MCF 10A (cell line): ENCODE measurements at regions of chr3 and their contacts with region 1.

Region 1: DNA sequence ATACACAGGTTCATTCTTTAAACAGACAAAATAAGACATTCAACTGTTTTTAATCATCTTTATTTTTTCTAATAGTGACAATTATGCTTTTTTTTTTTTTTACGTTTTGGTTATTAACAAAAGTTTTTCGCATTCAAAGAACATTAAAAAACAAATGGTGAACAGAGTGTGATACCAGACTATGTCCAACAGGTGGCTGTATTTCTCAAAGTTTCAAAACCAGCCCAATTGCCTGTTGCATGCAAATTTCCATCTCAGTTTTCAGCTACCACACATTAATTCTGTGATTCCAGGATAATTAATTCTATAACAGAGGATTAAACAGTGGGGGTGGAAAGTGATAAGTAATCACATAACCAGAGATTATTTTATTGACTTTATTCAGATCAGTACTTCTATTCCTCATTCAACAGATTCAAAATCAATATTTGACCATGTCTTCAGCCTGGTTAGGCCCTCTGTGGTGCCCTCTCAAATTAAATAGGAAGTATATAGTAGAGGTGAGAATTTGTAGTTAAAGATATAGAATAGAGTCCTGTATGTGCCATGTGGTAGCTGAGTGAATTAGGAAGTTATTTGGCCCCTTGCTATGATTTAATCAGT is 122.2 kb upstream of the DCBLD2 start:
- DNase-seq: peak; percentile 55
- H3K4me3 Mint-ChIP-seq: no peak overlapping the region
- H3K27ac Mint-ChIP-seq: no peak overlapping the region
- H3K4me1 Mint-ChIP-seq: no peaks in the 10 kb centered on the region
- H3K27me3 Mint-ChIP-seq: no peaks in the 10 kb centered on the region
- CTCF ChIP-seq: peak; percentile 62

Region 2: GRCh38 chr3:99473321-99473751 is 449.6 kb after region 1 on chr3:
- CTCF ChIA-PET with region 1: no interaction called
- POLR2A ChIA-PET with region 1: no interaction called
- intact Hi-C with region 1: no loop called
- DNase-seq: peak; percentile 55
- H3K4me3 Mint-ChIP-seq: no peak overlapping the region
- H3K27ac Mint-ChIP-seq: no peak overlapping the region
- H3K4me1 Mint-ChIP-seq: no peaks in the 10 kb centered on the region
- H3K27me3 Mint-ChIP-seq: no peaks in the 10 kb centered on the region
- CTCF ChIP-seq: no peak

Region 3: DNA sequence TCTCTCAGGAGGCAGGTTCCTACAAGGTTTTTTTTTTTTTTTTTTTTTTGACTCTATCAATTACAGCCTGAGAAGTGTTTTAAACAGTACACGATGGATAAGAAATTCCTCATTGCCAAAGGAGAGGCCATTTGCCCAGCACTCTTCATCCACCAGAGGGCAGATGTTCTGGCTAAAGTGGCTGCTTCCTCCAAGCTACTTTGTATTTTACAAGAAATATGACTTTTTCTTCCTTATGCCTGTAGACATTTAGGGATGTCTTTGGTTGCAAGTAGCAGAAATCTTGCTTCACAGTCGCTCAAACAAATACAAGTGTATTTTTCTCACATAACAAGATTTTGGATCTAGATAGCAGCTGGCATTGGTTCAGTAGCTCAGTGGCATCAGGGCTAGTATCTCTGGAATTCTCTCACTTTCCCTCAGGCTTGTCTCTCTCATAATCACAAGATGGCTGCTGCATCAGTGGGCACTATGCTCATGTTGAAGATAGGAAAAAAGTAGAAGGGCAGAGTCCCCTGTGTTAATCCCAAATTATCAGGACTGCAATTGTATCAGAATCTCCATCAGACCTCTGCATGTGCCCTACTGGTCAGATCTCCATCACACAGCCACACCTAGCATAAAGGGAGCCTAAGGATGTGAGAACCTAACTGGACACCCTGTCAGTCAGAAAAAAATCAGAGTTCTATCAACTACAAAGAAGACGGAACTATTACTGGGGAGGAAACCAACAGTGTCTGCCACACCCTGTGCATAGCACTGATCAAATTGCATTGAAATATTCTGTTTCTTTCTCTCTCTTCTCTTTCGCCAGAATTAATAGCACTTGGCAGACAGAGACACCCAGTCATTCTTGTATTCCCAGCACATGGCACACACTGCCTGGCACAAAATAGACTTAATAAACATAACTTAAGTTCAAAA is 475.8 kb after region 1 on chr3:
- CTCF ChIA-PET with region 1: interaction called, 3 read pairs
- POLR2A ChIA-PET with region 1: no interaction called
- intact Hi-C with region 1: loop called (anchors 2 kb)
- DNase-seq: peak; percentile 70
- H3K4me3 Mint-ChIP-seq: no peak overlapping the region
- H3K27ac Mint-ChIP-seq: no peak overlapping the region
- H3K4me1 Mint-ChIP-seq: peaks cover 28% of the 10 kb centered on the region
- H3K27me3 Mint-ChIP-seq: no peaks in the 10 kb centered on the region
- CTCF ChIP-seq: peak; percentile 61

Region 4: DNA sequence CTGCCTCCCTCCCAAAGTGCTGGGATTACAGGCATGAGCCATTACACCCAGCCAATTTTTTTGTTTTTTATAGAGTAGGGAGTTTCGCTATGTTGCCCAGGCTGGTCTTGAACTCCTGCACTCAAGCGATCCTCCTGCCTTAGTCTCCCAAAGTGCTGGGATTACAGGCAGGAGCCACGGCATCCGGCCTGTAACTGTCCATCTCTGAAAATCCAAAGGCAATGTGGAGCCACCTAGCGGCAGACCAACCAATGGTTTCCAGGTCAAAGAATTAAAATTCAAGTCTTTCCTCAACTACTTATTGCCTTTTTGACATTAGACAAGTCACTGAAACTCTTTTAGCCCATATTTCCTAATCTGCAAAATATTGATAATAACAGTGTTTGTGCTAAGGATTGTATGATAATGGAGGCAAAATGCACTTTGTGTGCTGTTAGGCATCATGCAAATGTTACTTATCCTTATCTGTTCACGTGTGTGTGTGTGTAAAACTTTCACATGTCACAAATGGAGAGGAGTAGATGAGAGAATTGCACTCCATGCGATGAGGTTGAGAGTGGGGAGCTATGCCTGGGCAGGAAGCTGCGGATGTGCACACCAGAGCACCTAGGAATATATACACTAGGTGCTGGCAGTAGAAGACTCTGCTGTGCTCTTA is 663.4 kb after region 1 on chr3:
- CTCF ChIA-PET with region 1: interaction called, 21 read pairs
- POLR2A ChIA-PET with region 1: no interaction called
- intact Hi-C with region 1: loop called (anchors 2 kb)
- DNase-seq: peak; percentile 76
- H3K4me3 Mint-ChIP-seq: no peak overlapping the region
- H3K27ac Mint-ChIP-seq: peak overlapping the region; percentile 71
- H3K4me1 Mint-ChIP-seq: peaks cover 15% of the 10 kb centered on the region
- H3K27me3 Mint-ChIP-seq: no peaks in the 10 kb centered on the region
- CTCF ChIP-seq: peak; percentile 69

Region 5: GRCh38 chr3:99747915-99748314 is 724.2 kb after region 1 on chr3:
- CTCF ChIA-PET with region 1: interaction called, 35 read pairs
- POLR2A ChIA-PET with region 1: no interaction called
- intact Hi-C with region 1: loop called (anchors 1 kb)
- DNase-seq: peak; percentile 49
- H3K4me3 Mint-ChIP-seq: no peak overlapping the region
- H3K27ac Mint-ChIP-seq: no peak overlapping the region
- H3K4me1 Mint-ChIP-seq: peaks cover 14% of the 10 kb centered on the region
- H3K27me3 Mint-ChIP-seq: no peaks in the 10 kb centered on the region
- CTCF ChIP-seq: peak; percentile 39

Region 6: GRCh38 chr3:99765042-99765942 is 741.6 kb after region 1 on chr3:
- CTCF ChIA-PET with region 1: interaction called, 12 read pairs
- POLR2A ChIA-PET with region 1: no interaction called
- intact Hi-C with region 1: no loop called
- DNase-seq: no peak
- H3K4me3 Mint-ChIP-seq: no peak overlapping the region
- H3K27ac Mint-ChIP-seq: no peak overlapping the region
- H3K4me1 Mint-ChIP-seq: peaks cover 6% of the 10 kb centered on the region
- H3K27me3 Mint-ChIP-seq: no peaks in the 10 kb centered on the region
- CTCF ChIP-seq: no peak

Region 7: GRCh38 chr3:99789011-99789721 is 765.5 kb after region 1 on chr3:
- CTCF ChIA-PET with region 1: interaction called, 3 read pairs
- POLR2A ChIA-PET with region 1: no interaction called
- intact Hi-C with region 1: loop called (anchors 1 kb)
- DNase-seq: peak; percentile 66
- H3K4me3 Mint-ChIP-seq: no peak overlapping the region
- H3K27ac Mint-ChIP-seq: no peak overlapping the region
- H3K4me1 Mint-ChIP-seq: peaks cover 6% of the 10 kb centered on the region
- H3K27me3 Mint-ChIP-seq: no peaks in the 10 kb centered on the region
- CTCF ChIP-seq: peak; percentile 63

Region 8: DNA sequence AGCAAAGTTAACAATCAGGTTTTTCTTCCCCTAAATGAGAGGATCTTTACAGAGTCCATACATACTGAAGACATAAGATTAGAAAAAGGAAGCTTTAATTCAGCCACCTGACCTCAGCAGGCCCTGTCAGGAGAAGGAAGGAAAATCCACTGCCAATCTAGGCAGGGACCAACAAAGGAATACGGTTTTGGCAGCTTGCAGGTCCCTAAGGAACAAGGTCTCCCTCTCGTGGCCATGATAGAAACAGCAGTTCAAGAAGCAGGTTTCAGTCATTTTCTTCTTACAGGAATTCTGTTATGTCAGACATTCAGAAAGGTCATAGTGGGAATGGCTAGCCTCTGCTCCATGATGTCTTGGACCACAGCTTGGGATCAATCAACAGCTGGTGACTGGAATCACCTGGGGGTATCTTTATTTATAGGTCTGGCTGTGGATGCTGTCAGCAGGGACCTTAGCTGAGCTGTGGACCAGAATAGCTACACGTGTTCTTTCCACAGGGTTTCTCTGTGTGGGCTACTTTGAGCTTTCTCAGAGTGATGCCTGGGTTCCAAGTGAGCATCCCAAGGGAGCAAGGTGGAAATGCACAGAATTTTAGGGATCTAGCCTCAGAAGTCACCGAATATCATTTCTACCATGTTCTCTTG is 784.6 kb after region 1 on chr3:
- CTCF ChIA-PET with region 1: interaction called, 4 read pairs
- POLR2A ChIA-PET with region 1: no interaction called
- intact Hi-C with region 1: loop called (anchors 5 kb)
- DNase-seq: peak; percentile 74
- H3K4me3 Mint-ChIP-seq: no peak overlapping the region
- H3K27ac Mint-ChIP-seq: no peak overlapping the region
- H3K4me1 Mint-ChIP-seq: no peaks in the 10 kb centered on the region
- H3K27me3 Mint-ChIP-seq: no peaks in the 10 kb centered on the region
- CTCF ChIP-seq: peak; percentile 69